ENCODE measurements at regions of chr6 and their contacts with region 1.

Region 1: DNA sequence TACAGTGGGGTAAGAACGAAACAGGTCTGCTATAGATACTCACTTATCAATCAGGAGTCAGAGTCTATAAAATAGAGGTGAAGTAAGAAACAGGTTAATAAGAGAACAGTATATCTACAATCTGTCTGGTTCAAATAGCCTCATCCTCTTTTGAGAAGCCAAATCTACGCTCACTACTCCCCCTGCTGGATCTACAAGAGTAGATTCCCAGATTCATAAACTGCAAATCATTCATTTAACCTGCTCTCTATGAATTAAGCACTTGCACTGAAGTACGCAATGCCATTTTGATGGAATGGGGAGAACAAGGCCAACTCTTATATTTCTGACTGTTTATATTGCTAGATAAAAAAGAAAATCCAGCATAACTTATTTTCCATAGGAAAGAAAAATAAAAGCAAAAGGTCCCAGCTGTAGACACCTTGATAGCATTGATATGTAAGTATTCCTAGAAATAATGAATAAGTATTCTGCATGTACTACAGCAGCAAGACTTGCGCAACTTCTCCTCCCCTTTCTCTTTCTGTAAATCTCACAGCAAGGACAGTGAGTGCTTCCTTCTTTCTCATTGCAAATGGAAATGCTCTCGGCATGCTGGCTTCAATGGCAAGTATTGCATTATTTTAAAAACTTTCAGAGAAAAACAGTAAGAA is 92.3 kb downstream of the RFX6 start:
- DNase-seq: peak in 3 of 6 donors; percentile 11 to 28 (median 17)
- ATAC-seq: peak; percentile 61 to 92 (median 89)
- H3K4me3 ChIP-seq: no peak overlapping the region
- H3K27ac ChIP-seq: no peak overlapping the region
- H3K4me1 ChIP-seq: no peaks in the 10 kb centered on the region
- H3K27me3 ChIP-seq: no peaks in the 10 kb centered on the region
- CTCF ChIP-seq: peak; percentile 38 to 61 (median 48)

Region 2: GRCh38 chr6:116779573-116780164 is 189.7 kb before region 1 on chr6:
- intact Hi-C with region 1: loop called in 1 of 3 experiments (anchors 10 kb)
- DNase-seq: no peak
- ATAC-seq: peak; percentile 53 to 80 (median 74)
- H3K4me3 ChIP-seq: no peak overlapping the region
- H3K27ac ChIP-seq: no peak overlapping the region
- H3K4me1 ChIP-seq: no peaks in the 10 kb centered on the region
- H3K27me3 ChIP-seq: peaks cover 0 to 9% (median 2%) of the 10 kb centered on the region in 4 donors
- CTCF ChIP-seq: peak in 3 of 4 donors; percentile 23 to 35 (median 28)

Region 3: GRCh38 chr6:116876635-116877611 is 92.4 kb before region 1 on chr6 and contains the start of gene RFX6:
- intact Hi-C with region 1: loop called in 1 of 3 experiments (anchors 10 kb)
- DNase-seq: peak; percentile 13 to 79 (median 20)
- ATAC-seq: peak; percentile 79 to 97 (median 92)
- H3K4me3 ChIP-seq: peak within 1 kb of the TSS; percentile 11 to 62 (median 36)
- H3K27ac ChIP-seq: peak within 1 kb of the TSS in 1 of 4 donors; percentile 4
- H3K4me1 ChIP-seq: peaks cover 0 to 8% (median 0%) of the 10 kb centered on the region in 3 donors
- H3K27me3 ChIP-seq: peaks cover 0 to 18% (median 9%) of the 10 kb centered on the region in 4 donors
- CTCF ChIP-seq: no peak
- total RNA-seq, gene RFX6: 0.51 to 4.1 (median 1.5) TPM